ENCODE measurements at regions of chr18 and their contacts with region 1.

Region 1: GRCh38 chr18:44887227-44887631 is 206.5 kb downstream of the SETBP1 start:
- DNase-seq: peak; percentile 76
- H3K4me3 Mint-ChIP-seq: no peak overlapping the region
- H3K27ac Mint-ChIP-seq: peak overlapping the region; percentile 78
- H3K4me1 Mint-ChIP-seq: peaks cover 17% of the 10 kb centered on the region
- H3K27me3 Mint-ChIP-seq: peaks cover 7% of the 10 kb centered on the region

Region 2: GRCh38 chr18:44637210-44638051 is 249.8 kb before region 1 on chr18:
- CTCF ChIA-PET with region 1: no interaction called
- intact Hi-C with region 1: loop called (anchors 1 kb)
- DNase-seq: peak; percentile 8
- H3K4me3 Mint-ChIP-seq: no peak overlapping the region
- H3K27ac Mint-ChIP-seq: no peak overlapping the region
- H3K4me1 Mint-ChIP-seq: no peaks in the 10 kb centered on the region
- H3K27me3 Mint-ChIP-seq: peaks cover 3% of the 10 kb centered on the region

Region 3: DNA sequence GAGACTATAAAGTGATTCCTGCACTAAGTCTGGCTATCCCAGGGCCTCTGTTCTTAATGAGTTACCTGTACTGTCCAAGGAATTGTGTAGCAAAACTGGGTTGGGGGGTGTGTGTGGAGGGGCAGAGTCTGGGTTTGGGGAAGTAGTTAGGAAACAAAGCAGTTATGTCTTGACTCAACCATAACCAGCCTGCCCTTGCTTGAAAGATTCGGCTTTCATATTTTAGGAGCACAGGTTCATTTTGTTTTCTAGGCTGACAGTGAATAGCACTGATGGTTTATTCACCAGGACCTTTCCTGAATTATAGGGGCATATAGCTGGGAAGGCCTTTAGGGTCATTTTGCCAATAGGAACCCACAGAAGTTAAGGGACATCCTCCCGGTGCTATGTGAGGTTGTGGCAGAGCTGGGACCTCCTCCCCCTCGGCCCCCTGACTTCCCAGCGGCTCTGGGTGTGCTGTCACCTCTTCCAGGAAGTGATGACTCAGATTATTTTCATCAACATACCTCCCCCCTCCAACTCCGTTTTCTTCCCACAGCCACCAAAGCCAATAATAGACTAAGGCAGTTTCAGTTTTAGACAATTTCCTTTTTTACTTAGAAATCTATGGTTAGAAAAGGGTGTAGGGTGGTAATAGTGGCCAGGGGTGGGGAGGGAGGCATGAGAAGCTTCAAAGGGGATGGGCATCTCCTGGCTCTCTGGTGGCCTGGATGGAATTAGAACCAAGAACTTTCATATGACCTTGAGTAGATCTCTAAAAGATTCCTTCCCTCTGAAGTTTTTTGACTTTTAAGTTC is 161.7 kb before region 1 on chr18:
- CTCF ChIA-PET with region 1: no interaction called
- intact Hi-C with region 1: loop called (anchors 1 kb)
- DNase-seq: peak; percentile 78
- H3K4me3 Mint-ChIP-seq: no peak overlapping the region
- H3K27ac Mint-ChIP-seq: peak overlapping the region; percentile 59
- H3K4me1 Mint-ChIP-seq: peaks cover 54% of the 10 kb centered on the region
- H3K27me3 Mint-ChIP-seq: no peaks in the 10 kb centered on the region

Region 4: DNA sequence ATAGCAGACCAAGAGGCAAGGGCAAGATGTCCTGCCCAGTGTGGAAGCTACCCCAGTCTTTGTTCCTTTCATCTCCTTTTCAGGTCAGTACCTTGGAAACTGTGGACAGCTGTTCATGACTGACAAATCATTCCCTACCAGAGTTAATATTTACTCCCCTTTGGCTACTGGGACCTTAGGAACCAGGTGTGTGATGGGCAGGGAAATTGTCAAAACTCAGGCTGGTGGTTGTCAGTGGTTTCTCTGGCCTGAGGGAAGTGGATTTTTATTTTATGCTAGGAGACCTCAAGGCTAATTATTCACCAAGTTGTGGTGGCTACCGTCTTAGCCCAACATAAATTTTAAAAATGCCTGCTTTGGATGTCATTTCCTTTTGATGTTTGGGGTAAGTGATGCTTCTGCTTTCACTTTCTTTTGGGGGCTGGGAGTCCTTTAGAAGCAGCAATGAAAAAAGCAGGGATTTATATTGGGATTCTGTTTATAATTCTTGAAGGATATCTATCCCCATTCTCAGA is 87.3 kb before region 1 on chr18:
- CTCF ChIA-PET with region 1: no interaction called
- intact Hi-C with region 1: loop called (anchors 2 kb)
- DNase-seq: no peak
- H3K4me3 Mint-ChIP-seq: no peak overlapping the region
- H3K27ac Mint-ChIP-seq: no peak overlapping the region
- H3K4me1 Mint-ChIP-seq: peaks cover 49% of the 10 kb centered on the region
- H3K27me3 Mint-ChIP-seq: peaks cover 9% of the 10 kb centered on the region

Region 5: GRCh38 chr18:44838971-44839666 is 48.1 kb before region 1 on chr18:
- CTCF ChIA-PET with region 1: no interaction called
- intact Hi-C with region 1: loop called (anchors 1 kb)
- DNase-seq: peak; percentile 85
- H3K4me3 Mint-ChIP-seq: no peak overlapping the region
- H3K27ac Mint-ChIP-seq: no peak overlapping the region
- H3K4me1 Mint-ChIP-seq: peaks cover 12% of the 10 kb centered on the region
- H3K27me3 Mint-ChIP-seq: peaks cover 22% of the 10 kb centered on the region

Region 6: DNA sequence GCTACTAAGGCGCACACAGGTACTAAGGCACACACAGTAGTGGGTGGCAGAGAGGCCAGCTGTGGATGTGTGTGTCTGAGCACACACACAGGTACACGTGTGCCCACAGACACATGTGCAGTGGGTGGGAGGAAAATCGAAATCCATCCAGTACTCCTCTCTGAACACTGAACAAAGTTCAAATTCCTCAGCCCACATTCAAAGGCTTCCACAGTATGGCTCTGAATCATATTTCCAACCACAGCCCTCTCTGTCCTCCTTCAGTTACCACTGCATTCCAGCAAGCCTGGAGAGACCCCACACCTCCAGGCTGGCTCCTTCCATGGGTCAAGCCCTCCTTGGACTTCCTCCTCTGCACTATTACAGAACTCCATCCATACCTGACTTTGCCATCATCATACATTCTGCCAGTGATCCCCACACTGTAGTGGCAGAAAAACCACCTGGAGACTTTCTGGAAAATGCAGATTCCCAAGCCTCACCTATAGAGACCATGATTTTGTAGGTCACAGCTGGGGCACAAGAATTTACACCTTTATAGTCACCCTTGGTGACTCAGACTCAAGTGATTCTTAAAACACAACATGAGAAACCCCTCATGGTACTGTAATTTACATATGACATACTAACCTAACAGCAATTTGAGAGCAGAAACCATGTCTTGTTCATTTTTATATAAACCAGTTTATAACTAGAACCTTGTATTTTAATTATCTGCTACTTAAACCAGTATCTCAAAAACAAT is 1048.5 kb after region 1 on chr18:
- CTCF ChIA-PET with region 1: no interaction called
- intact Hi-C with region 1: loop called (anchors 5 kb)
- DNase-seq: peak; percentile 7
- H3K4me3 Mint-ChIP-seq: no peak overlapping the region
- H3K27ac Mint-ChIP-seq: no peak overlapping the region
- H3K4me1 Mint-ChIP-seq: peaks cover 33% of the 10 kb centered on the region
- H3K27me3 Mint-ChIP-seq: no peaks in the 10 kb centered on the region